ENCODE measurements at regions of chr2 and their contacts with region 1.

Region 1: DNA sequence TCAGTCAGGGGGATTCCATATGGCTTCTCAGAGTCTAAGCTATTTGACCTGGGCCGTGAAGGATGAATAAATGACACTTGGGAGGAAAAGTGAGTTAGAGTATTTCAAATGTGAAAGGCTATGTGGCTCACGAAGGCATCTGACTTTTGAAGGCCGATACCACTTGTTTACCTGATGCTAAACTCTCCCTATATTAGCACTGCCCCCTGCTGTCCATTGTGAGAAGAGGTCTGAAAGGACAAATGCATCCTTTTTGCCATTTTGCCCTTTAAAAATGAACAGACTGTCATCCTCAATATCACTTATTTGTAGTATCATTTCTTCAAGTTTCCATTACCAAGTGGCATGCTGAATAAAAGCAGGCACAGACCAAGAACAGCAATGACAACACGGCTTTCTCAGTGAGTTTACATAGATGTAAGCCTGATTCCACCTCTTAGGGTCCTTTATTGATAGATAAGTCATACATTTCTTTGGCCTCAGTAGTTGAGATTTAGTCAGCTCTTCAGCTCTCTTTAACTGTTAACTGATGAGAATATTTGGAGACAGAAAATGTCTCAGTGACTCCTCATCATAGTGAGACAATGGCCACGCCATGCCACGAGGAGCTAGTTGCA is 40.1 kb downstream of the DOCK10 start:
- DNase-seq: peak; percentile 54
- H3K4me3 Mint-ChIP-seq: no peak overlapping the region
- H3K27ac Mint-ChIP-seq: peak overlapping the region; percentile 77
- H3K4me1 Mint-ChIP-seq: peaks cover 70% of the 10 kb centered on the region
- H3K27me3 Mint-ChIP-seq: no peaks in the 10 kb centered on the region

Region 2: GRCh38 chr2:224778474-224778877 is 223.7 kb before region 1 on chr2:
- intact Hi-C with region 1: loop called (anchors 2 kb)
- DNase-seq: peak; percentile 39
- H3K4me3 Mint-ChIP-seq: no peak overlapping the region
- H3K27ac Mint-ChIP-seq: no peak overlapping the region
- H3K4me1 Mint-ChIP-seq: no peaks in the 10 kb centered on the region
- H3K27me3 Mint-ChIP-seq: no peaks in the 10 kb centered on the region

Region 3: GRCh38 chr2:224885836-224886547 is 116.2 kb before region 1 on chr2:
- intact Hi-C with region 1: loop called (anchors 1 kb)
- DNase-seq: no peak
- H3K4me3 Mint-ChIP-seq: no peak overlapping the region
- H3K27ac Mint-ChIP-seq: peak overlapping the region; percentile 88
- H3K4me1 Mint-ChIP-seq: peaks cover 61% of the 10 kb centered on the region
- H3K27me3 Mint-ChIP-seq: no peaks in the 10 kb centered on the region

Region 4: GRCh38 chr2:224946895-224947294 is 55.3 kb before region 1 on chr2:
- intact Hi-C with region 1: loop called (anchors 2 kb)
- DNase-seq: no peak
- H3K4me3 Mint-ChIP-seq: peak overlapping the region; percentile 87
- H3K27ac Mint-ChIP-seq: peak overlapping the region; percentile 86
- H3K4me1 Mint-ChIP-seq: peaks cover 75% of the 10 kb centered on the region
- H3K27me3 Mint-ChIP-seq: no peaks in the 10 kb centered on the region

Region 5: DNA sequence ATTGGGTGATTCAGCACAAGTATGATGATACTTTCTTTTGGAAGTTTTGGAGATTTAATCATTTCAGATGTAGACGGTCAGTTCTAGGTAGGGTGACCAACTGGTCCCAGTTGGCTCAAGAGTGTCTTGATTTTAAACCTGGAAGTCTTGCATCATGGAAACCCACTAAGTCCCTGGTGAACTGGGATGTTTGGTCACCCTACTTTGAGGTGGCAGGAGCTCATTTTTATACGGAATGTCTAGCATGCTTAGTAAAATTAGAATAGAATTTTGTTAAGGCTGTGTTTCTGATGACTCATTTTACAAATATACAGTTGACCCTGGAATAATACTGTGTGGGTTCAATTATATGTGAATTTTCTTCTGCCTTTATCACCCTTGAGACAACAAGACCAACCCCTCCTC is 101.6 kb after region 1 on chr2:
- intact Hi-C with region 1: no loop called
- DNase-seq: no peak
- H3K4me3 Mint-ChIP-seq: no peak overlapping the region
- H3K27ac Mint-ChIP-seq: no peak overlapping the region
- H3K4me1 Mint-ChIP-seq: no peaks in the 10 kb centered on the region
- H3K27me3 Mint-ChIP-seq: peaks cover 3% of the 10 kb centered on the region

Region 6: GRCh38 chr2:225660262-225661131 is 658.4 kb after region 1 on chr2:
- intact Hi-C with region 1: loop called (anchors 10 kb)
- DNase-seq: peak; percentile 36
- H3K4me3 Mint-ChIP-seq: no peak overlapping the region
- H3K27ac Mint-ChIP-seq: no peak overlapping the region
- H3K4me1 Mint-ChIP-seq: no peaks in the 10 kb centered on the region
- H3K27me3 Mint-ChIP-seq: peaks cover 6% of the 10 kb centered on the region